A673 (cell line): ENCODE measurements at regions of chr14 and their contacts with region 1.

Region 1: GRCh38 chr14:31286456-31287293 is 79.1 kb upstream of the HECTD1 start:
- DNase-seq: peak; percentile 24
- H3K4me3 ChIP-seq: no peak overlapping the region
- H3K27ac ChIP-seq: no peak overlapping the region
- H3K4me1 ChIP-seq: no peaks in the 10 kb centered on the region
- H3K27me3 ChIP-seq: no peaks in the 10 kb centered on the region
- CTCF ChIP-seq: peak; percentile 51

Region 2: DNA sequence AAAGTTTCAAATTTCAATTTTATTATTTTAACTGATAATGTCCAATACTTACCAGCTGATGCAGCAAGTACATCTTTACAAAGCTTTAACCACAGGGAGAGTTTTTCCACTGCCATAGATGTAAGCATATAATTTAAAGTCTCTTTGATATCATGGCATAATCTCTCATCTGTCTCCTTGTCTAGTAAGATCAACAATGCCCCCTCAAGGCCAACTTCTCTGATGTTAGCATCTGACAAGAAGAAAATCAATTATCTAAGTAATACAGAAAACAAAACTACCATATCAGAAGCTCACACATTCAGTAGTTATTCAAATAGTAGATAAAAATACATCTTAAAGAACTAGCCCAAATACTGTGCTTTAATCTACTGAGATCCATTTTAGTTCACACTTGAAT is 39.4 kb after region 1 on chr14:
- CTCF ChIA-PET with region 1: interaction called, 12 read pairs
- POLR2A ChIA-PET with region 1: no interaction called
- intact Hi-C with region 1: no loop called
- DNase-seq: peak; percentile 24
- H3K4me3 ChIP-seq: no peak overlapping the region
- H3K27ac ChIP-seq: no peak overlapping the region
- H3K4me1 ChIP-seq: no peaks in the 10 kb centered on the region
- H3K27me3 ChIP-seq: no peaks in the 10 kb centered on the region
- CTCF ChIP-seq: peak; percentile 40; the same call in 1 of the 2 replicates

Region 3: GRCh38 chr14:31435276-31435675 is 148.6 kb after region 1 on chr14:
- CTCF ChIA-PET with region 1: no interaction called
- POLR2A ChIA-PET with region 1: no interaction called
- intact Hi-C with region 1: no loop called
- DNase-seq: peak; percentile 50
- H3K4me3 ChIP-seq: no peak overlapping the region
- H3K27ac ChIP-seq: no peak overlapping the region
- H3K4me1 ChIP-seq: peaks cover 6% of the 10 kb centered on the region
- H3K27me3 ChIP-seq: no peaks in the 10 kb centered on the region
- CTCF ChIP-seq: no peak